ENCODE measurements at regions of chr2 and their contacts with region 1.

Region 1: DNA sequence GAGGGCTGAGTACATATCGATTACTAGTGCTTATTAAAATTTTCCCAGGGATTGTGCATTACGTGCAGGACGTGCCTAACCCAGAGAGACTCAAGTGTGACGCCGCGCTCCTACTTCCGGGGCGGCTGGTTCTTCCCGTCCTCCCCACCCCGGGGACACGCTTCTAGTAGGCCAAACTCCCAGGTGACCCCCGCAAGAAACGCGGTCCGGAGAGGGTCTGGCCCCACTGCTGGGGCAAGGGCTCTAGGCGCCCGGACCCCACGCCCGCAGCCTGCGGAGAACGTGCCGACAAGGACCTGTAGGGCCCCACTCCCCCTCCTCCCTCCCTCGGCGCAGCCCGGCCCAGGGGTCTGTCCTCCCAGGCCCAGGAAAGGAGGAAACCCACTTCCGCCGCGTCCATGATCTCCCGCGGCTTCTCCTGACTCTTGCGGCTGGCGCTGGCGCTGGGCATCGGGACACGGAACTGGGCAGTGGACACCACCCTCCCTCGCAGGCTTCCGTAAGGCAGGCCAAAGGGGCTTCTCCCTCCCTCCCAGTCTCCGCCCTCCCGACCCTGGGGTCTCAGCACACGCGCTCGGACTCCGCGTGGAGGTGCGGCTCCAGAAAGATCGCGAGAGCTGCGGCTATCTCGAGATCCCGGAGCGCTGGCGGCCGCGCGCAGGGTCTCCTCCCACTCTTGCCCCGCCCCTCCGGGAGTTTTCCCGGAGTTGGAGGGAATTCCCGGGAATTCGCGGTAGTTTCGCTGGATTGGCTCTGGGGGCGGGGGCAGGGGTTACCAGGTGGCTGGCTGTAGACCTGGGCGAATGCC is at the start of gene DARS1:
- DNase-seq: peak; percentile 96
- ATAC-seq: peak; percentile 98
- total RNA-seq, gene DARS1: 56.8 to 71.8 TPM

Region 2: GRCh38 chr2:135820003-135820618 is 165.1 kb before region 1 on chr2:
- intact Hi-C with region 1: no loop called
- DNase-seq: no peak
- ATAC-seq: no peak

Region 3: GRCh38 chr2:135960656-135961551 is 24.3 kb before region 1 on chr2:
- intact Hi-C with region 1: loop called in 1 of 2 experiments (anchors 2 kb)
- DNase-seq: no peak
- ATAC-seq: no peak